Keratinocyte (primary cell): ENCODE measurements at regions of chr9 and their contacts with region 1.

Region 1: DNA sequence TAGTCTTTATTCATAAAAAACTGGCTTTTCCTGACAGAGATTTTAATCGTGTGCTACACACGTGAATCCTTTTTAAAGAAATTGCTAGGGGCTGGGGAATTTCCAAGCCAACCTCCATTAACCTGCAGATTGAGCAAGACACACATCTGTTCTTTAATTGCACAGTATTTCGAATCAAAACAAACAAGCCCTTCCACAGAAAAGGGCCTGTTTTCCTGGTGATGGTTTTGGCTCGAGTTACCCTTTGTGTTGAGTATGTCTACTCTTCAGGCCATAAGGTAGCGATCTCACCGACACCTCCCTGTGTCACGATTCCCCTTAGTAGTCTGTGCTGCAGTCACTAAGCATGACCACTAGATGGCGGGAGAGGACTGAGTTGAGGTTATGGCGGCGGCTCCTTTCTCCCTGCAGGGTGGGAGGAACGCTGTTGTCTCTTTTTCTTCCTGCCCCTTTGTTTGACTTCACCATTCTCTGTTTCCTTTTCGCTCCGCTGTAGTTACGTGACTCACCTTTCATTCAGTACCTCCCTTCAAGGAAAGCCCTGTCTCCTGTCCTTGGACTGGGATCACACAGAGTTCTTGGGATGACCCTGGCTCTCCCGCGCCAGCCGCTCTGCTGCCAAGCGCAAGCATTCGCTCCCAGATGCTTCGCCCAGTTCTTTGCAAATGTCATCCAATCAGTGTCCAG is 137.1 kb upstream of the SLC24A2 start:
- DNase-seq: peak; percentile 69
- H3K4me3 ChIP-seq: peak overlapping the region in 2 of 3 experiments; percentile 27 to 45
- H3K27ac ChIP-seq: no peak overlapping the region
- H3K4me1 ChIP-seq: peaks cover 9% of the 10 kb centered on the region
- H3K27me3 ChIP-seq: no peaks in the 10 kb centered on the region
- CTCF ChIP-seq: peak; percentile 92 to 99 (median 99)

Region 2: DNA sequence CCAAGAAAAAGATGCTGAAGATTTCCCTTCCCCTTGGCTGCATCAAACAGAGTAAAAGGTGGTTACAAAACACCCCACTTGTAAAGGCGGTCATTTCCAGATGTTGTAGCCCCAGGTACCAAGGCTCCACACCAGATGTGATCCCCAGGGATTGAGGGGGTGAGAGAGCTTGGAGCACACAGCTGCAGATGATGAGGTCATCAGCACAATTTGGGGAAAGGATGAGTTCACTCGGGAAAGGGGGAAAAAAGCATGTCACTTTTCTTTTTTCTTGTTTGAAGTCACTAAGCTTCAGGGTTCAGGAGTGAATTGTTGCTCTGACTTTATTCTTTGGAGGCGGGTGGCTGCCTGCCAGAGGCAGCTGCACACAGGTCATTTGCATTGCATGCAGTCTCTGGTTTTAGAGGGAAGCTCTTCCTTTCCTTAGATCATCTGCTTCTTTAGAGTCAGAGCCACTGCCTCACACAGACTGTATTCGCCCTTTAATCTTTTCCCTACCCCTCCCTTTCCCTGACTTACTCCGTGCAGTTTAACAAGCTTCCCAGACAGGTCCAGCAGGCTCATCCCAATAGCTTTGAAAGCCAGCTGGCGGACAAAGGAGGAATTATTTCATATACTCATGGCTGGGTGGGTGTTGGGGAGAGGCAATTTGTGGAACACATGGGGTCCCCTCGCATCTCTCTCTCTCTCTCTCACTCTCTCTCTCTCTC is 272.2 kb after region 1 on chr9:
- dilution Hi-C with region 1: loop called (anchors 25 kb)
- DNase-seq: peak; percentile 1
- H3K4me3 ChIP-seq: no peak overlapping the region
- H3K27ac ChIP-seq: no peak overlapping the region
- H3K4me1 ChIP-seq: peaks cover 6% of the 10 kb centered on the region
- H3K27me3 ChIP-seq: no peaks in the 10 kb centered on the region
- CTCF ChIP-seq: peak in 1 of 3 experiments; percentile 20

Region 3: DNA sequence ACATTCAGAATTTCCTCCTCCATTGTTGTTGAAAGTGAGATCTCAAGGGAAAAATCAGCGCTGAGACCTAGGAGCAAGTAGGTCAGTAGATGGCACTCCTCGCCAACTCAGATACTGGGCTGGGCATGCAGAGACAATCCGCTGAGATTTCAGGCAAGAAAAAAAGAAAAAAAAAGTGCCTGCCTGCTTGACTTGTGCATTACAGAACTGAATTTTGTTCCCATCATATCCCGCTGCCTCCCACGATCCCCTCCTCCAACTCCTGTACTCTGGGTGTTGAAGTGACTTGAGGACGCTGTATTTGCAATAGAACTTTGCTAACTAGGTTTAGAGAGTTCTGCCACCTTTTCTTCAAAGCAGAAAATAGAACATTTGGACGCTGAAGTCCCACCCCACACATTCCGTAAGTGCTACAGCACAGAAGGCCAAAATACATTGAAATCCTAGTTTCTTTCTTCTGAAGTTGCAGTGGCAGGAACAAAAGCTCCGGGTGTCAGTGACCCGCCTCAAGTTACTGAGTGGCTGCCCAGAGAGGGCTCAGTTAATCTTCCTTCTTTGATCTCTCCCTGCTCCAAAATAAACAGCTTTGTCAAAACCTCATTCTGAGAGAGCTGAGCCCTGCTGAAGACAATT is 430.6 kb after region 1 on chr9:
- dilution Hi-C with region 1: loop called (anchors 25 kb)
- DNase-seq: no peak
- H3K4me3 ChIP-seq: no peak overlapping the region
- H3K27ac ChIP-seq: peak overlapping the region; percentile 5
- H3K4me1 ChIP-seq: peaks cover 43% of the 10 kb centered on the region
- H3K27me3 ChIP-seq: no peaks in the 10 kb centered on the region
- CTCF ChIP-seq: peak; percentile 76 to 84 (median 84)